Astrocyte of the cerebellum (primary cell): ENCODE measurements at regions of chr15 and their contacts with region 1.

Region 1: GRCh38 chr15:57884936-57885335 is 178.4 kb downstream of the POLR2M start:
- DNase-seq: no peak
- H3K4me3 ChIP-seq: no peak overlapping the region
- CTCF ChIP-seq: no peak

Region 2: DNA sequence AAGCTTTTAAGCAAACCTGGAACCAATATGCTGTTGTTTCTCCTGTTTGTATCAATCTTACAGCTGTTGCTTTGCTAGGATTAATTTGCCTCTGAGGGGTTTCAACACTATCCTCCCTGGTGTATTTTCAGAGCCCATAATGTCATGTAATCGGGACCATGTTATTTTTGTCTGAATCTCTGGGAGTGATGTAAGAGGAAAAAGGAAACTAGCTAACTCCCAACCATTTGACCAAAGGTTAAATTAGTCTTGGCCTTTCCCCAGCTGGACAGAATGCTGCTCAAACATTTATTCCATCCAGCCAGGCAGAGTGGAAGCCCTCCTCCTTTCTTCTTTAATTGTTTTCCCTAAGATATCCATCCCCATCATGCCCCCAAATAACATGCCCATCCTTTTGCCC is 38.4 kb after region 1 on chr15:
- in situ Hi-C with region 1: loop called (anchors 5 kb)
- DNase-seq: no peak
- H3K4me3 ChIP-seq: no peak overlapping the region
- CTCF ChIP-seq: no peak

Region 3: GRCh38 chr15:57943766-57944420 is 59.0 kb after region 1 on chr15:
- in situ Hi-C with region 1: no loop called
- DNase-seq: no peak
- H3K4me3 ChIP-seq: no peak overlapping the region
- CTCF ChIP-seq: no peak